ENCODE measurements at regions of chr14 and their contacts with region 1.

Region 1: DNA sequence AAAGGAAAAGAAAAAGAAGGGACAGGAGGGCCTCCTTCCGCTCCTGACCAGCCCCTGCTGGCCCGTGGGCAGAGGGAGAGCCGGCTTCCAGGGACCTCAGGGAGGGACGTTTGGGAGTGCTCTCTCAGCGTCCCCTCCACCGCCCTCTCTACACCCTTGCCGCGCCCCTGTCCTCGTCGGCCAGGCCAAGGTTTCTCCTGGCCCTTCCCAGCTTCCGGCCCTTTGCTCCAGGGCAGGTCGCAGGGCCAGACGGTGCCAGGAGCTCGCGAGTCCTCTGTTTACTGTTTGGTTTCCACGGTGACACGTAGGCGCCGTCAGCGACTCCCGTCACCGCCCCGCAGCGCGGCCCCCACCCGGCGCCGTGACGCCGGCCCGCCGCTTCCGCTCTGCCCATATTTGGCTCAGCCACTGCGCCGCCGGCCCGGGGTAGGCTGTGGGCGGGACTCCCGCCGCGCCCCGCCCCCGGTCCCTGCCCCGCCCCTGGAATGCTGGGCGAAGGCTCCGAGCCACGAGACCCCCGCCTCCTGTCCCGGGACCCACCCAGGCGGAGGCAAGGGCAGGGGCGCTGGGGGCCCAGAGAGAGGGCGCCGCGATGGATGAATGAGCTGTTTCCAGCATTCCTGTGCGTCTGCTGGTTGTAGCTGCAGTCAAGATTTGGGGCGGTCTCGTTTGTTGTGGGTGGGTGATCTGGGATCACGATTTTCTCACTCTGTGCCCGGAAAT is 15.5 kb downstream of the FOS start:
- DNase-seq: peak; percentile 98
- H3K4me3 ChIP-seq: peak overlapping the region; percentile 82
- H3K27ac ChIP-seq: peak overlapping the region; percentile 91
- H3K4me1 ChIP-seq: peaks cover 18% of the 10 kb centered on the region
- H3K27me3 ChIP-seq: no peaks in the 10 kb centered on the region

Region 2: GRCh38 chr14:74945823-74946682 is 348.0 kb before region 1 on chr14:
- in situ Hi-C with region 1: loop called (anchors 25 kb)
- DNase-seq: peak; percentile 71
- H3K4me3 ChIP-seq: no peak overlapping the region
- H3K27ac ChIP-seq: no peak overlapping the region
- H3K4me1 ChIP-seq: peaks cover 11% of the 10 kb centered on the region
- H3K27me3 ChIP-seq: no peaks in the 10 kb centered on the region

Region 3: GRCh38 chr14:75952489-75952888 is 658.4 kb after region 1 on chr14:
- in situ Hi-C with region 1: no loop called
- DNase-seq: no peak
- H3K4me3 ChIP-seq: no peak overlapping the region
- H3K27ac ChIP-seq: no peak overlapping the region
- H3K4me1 ChIP-seq: no peaks in the 10 kb centered on the region
- H3K27me3 ChIP-seq: no peaks in the 10 kb centered on the region